ENCODE measurements at regions of chr10 and their contacts with region 1.

Region 1: GRCh38 chr10:29496341-29497162 is 138.2 kb downstream of the SVIL start:
- DNase-seq: peak; percentile 63 to 88 (median 65)
- ATAC-seq: peak in 3 of 4 donors; percentile 73 to 81 (median 79)
- H3K4me3 ChIP-seq: no peak overlapping the region
- H3K27ac ChIP-seq: no peak overlapping the region
- H3K4me1 ChIP-seq: peaks cover 0 to 4% (median 0%) of the 10 kb centered on the region in 12 donors
- H3K27me3 ChIP-seq: no peaks in the 10 kb centered on the region
- CTCF ChIP-seq: peak; percentile 81 to 95 (median 90)
- POLR2A ChIP-seq: no peak

Region 2: DNA sequence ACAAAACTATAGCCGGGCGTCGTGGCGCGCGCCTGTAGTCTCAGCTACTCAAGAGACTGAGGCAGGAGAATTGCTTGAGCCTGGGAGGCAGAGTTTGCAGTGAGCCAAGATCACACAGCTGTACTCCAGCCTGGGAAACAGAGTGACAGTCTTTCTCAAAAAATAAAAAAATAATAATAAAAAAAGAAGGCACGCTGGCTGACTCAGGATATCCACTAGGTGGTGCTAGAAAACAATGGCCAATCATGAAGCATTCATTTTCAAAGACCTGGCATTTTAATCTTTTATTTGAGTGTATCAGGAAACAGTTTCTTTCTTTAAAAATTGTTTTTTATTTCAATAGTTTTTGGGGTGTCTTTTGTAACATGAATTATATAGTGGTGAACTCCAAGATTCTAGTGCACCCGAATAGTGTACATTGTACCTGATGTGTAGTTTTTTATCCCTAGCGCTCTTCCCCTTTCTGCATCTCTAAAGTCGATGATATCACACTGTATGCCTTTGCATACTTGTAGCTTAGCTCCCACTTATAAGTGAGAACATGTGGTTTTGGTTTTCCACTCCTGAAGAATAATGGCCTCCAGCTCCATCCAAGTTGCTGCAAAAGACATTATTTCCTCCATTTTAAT is 119.1 kb before region 1 on chr10:
- intact Hi-C with region 1: loop called in 1 of 10 experiments (anchors 5 kb)
- DNase-seq: no peak
- ATAC-seq: peak in 1 of 4 donors; percentile 26
- H3K4me3 ChIP-seq: no peak overlapping the region
- H3K27ac ChIP-seq: no peak overlapping the region
- H3K4me1 ChIP-seq: no peaks in the 10 kb centered on the region
- H3K27me3 ChIP-seq: no peaks in the 10 kb centered on the region
- CTCF ChIP-seq: peak; percentile 59 to 79 (median 70)
- POLR2A ChIP-seq: no peak